ENCODE measurements at regions of chr2 and their contacts with region 1.

Region 1: DNA sequence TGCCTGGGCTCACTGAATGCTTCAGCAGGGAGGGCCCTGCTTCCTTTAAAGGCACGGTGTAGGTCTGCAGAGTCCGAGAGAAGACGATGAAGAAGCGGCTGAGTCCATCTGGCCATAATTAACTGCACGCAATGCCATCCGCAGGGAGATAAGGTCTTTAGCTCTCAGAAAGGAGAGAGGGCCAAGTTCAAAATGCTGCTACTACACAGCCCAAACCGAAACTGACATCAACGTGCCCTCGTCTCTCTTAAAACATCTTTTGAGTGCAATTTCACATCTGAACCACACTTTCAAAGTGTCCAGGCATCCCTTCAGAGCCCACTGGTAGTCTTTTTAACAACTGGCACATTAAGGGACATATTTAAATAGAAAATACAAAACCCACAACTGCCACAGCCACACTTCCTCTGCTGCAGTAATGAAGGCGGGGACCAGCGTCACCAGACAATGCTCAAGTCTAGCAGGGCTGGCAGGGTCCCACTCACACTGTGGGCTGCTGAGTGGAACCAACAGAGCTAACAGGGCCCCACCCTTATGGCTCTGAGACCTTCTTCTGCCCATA is 35.8 kb downstream of the ST3GAL5 start:
- DNase-seq: no peak
- CTCF ChIP-seq: no peak

Region 2: DNA sequence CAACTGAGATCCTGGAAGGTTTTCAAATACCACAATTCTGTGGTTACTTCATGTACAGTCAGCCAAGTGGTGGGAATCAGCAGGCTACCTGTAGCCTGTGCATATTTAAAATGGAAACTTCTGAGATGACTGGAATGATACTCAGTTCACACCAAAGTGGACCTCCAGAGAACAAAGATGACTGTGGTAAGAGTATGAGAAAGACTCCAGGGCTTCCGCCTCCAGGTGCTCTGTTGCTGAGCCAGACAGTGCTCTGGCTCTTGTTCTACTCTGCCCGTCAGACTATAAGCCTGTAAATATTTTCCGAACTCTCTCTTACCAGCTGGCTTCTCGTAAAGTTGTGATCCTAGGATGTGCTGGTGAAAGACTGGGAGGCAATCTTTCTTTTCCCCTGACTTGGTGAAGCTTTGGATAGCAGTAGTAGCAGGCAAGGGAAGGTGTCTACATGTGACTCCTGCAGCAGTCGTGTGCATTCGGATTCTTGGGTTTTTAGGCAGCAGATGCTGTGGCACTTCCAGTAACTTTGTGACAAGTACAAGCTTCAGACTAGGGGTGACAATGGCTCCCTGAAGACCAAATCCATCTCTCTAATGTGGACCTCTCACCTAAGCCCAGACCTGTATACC is 12.6 kb after region 1 on chr2:
- CTCF ChIA-PET with region 1: interaction called, 11 read pairs
- POLR2A ChIA-PET with region 1: no interaction called
- DNase-seq: peak; percentile 56
- CTCF ChIP-seq: no peak

Region 3: GRCh38 chr2:85878719-85879385 is 25.8 kb after region 1 on chr2:
- CTCF ChIA-PET with region 1: no interaction called
- POLR2A ChIA-PET with region 1: no interaction called
- DNase-seq: no peak
- CTCF ChIP-seq: no peak

Region 4: DNA sequence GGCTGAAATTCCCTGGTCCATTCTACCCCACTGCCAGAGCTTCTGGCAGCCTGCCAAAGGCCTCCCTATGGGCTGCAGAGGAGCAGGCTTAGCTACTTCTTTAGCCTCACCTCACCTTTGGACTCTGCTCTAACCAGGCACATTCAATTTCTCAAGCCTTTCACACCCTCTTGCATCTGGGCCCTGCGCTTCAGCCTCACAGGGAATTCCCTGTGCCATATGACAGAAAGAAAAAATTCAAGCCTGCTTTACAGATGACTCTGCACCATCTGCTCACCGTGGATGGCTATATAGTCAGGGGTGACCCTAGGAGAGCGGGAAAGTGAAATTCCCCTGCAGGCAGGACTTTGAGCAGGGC is 421.9 kb after region 1 on chr2:
- CTCF ChIA-PET with region 1: no interaction called
- POLR2A ChIA-PET with region 1: no interaction called
- DNase-seq: peak; percentile 46
- CTCF ChIP-seq: no peak

Measured in GM10248 (cell line).